ENCODE measurements at regions of chr9 and their contacts with region 1.

Region 1: DNA sequence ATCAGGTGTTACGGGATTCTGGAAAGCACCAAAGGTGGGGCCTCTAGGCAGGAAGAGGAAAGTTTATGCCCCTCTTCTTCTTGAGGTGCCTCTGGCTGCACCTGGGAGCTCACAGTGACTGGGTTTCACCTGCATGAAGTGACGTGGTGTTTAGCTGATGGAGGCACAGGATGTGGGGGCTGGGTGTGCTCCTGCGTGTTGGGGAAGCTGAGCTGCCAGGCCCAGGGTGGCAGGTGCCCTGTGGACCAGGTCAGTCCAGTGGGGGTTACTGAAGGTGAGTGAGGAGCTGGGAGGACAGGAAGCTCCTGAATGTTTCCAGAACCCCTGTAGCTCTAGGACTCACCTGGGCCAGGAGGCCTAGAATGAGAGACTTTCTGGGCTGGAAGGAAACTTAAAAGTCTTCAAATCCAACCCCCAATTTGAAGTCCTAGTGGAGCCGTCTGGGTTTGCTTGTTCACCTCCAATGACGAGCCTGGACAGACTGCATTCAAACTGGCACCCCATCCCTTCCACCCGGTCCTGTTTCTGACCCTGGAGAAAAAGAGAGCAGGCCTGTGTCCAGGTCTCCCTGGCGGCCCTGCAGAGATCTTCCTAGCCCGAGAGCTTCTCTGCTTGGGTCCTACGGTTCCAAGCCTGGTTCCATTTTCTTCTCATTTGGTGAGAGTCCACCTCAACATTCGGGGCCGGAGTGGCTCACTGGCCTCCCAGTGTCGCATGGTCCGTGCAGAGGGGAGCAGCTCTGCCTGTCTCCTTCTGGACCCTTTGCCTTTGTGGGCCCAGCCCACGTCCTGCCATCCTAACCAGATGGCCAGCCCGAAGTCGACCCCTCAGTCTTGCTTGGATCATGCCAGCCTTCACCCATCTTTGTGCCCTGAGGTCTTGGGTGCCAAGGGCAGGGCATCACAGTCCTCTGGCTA is 22.3 kb downstream of the TRAF1 start:
- DNase-seq: peak; percentile 89
- H3K4me3 ChIP-seq: peak overlapping the region; percentile 21
- H3K27ac ChIP-seq: peak overlapping the region; percentile 97
- H3K4me1 ChIP-seq: peaks cover 76% of the 10 kb centered on the region
- CTCF ChIP-seq: no peak

Region 2: GRCh38 chr9:120723547-120723946 is 180.8 kb before region 1 on chr9:
- CTCF ChIA-PET with region 1: no interaction called
- POLR2A ChIA-PET with region 1: no interaction called
- intact Hi-C with region 1: no loop called
- DNase-seq: no peak
- H3K4me3 ChIP-seq: no peak overlapping the region
- H3K27ac ChIP-seq: no peak overlapping the region
- H3K4me1 ChIP-seq: no peaks in the 10 kb centered on the region
- CTCF ChIP-seq: no peak

Region 3: DNA sequence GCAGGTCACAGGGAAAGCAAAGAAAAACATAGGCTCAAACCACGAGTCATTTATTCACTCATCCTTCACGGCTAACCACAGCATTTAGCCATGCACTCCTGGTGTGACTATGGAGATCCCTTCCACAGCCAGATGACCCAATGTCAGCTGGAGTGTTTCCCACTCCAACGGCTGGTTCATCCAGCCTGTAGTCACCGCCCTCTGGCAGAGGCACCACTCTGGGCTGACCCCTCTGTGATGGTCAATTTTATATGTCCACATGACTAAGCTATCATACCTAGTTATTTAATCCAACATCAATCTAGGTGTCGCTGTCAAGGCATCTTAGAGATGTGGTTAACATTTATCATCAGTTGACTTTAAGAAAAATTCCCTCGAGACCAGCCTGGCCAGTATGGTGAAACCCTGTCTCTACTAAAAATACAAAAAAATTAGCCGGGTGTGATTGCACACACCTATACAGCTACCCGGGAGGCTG is 17.8 kb before region 1 on chr9:
- CTCF ChIA-PET with region 1: interaction called, 15 read pairs
- POLR2A ChIA-PET with region 1: interaction called, 31 read pairs
- intact Hi-C with region 1: no loop called
- DNase-seq: peak; percentile 69
- H3K4me3 ChIP-seq: no peak overlapping the region
- H3K27ac ChIP-seq: peak overlapping the region; percentile 44
- H3K4me1 ChIP-seq: peaks cover 86% of the 10 kb centered on the region
- CTCF ChIP-seq: peak; percentile 54

Region 4: GRCh38 chr9:120892748-120893610 is 11.3 kb before region 1 on chr9:
- CTCF ChIA-PET with region 1: interaction called, 15 read pairs
- POLR2A ChIA-PET with region 1: interaction called, 31 read pairs
- intact Hi-C with region 1: no loop called
- DNase-seq: peak; percentile 97
- H3K4me3 ChIP-seq: peak overlapping the region; percentile 7
- H3K27ac ChIP-seq: peak overlapping the region; percentile 98
- H3K4me1 ChIP-seq: peaks cover 95% of the 10 kb centered on the region
- CTCF ChIP-seq: no peak

Region 5: GRCh38 chr9:120928483-120929228 is 24.3 kb after region 1 on chr9:
- CTCF ChIA-PET with region 1: interaction called, 7 read pairs
- POLR2A ChIA-PET with region 1: interaction called, 100 read pairs
- intact Hi-C with region 1: loop called (anchors 1 kb)
- DNase-seq: peak; percentile 87
- H3K4me3 ChIP-seq: peak overlapping the region; percentile 74
- H3K27ac ChIP-seq: peak overlapping the region; percentile 96
- H3K4me1 ChIP-seq: peaks cover 97% of the 10 kb centered on the region
- CTCF ChIP-seq: no peak

Region 6: DNA sequence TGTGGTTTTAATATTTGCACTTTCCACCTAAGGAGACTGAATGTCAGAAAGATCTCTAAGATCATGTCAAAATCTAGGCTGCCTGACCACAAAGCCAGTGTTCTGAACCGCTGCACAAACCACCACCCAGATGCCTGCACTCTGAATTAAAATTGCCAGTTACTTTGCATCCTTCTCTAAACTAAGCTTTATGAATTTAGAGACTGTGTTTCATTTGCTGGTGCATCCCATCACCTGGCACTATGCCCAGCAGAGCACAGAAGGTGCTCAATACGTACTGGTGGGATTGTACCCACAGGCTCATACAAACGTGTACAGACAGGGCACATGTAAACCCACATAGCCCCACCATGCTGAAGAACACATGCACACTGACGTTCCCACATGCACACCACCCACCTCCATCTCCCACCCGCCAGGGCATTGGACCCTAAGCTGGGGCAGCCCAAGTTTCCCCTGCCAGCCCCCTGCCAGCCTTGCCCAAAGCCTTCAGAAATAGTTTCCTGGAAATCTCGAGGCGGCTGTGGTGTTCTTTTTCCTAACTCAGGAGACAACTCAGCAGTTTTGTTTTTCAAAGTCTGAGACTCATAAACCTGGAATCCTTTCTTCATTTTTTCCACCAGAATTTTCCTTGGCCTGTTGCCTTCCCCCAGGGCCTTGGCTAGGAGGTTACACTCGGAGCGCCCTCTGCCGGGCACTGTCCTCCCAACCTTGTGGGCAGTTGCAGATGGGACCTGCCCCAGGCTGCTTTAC is 31.9 kb after region 1 on chr9:
- CTCF ChIA-PET with region 1: interaction called, 3 read pairs
- POLR2A ChIA-PET with region 1: interaction called, 100 read pairs
- intact Hi-C with region 1: loop called (anchors 2 kb)
- DNase-seq: peak; percentile 92
- H3K4me3 ChIP-seq: peak overlapping the region; percentile 49
- H3K27ac ChIP-seq: peak overlapping the region; percentile 96
- H3K4me1 ChIP-seq: peaks cover 81% of the 10 kb centered on the region
- CTCF ChIP-seq: peak; percentile 100

Region 7: DNA sequence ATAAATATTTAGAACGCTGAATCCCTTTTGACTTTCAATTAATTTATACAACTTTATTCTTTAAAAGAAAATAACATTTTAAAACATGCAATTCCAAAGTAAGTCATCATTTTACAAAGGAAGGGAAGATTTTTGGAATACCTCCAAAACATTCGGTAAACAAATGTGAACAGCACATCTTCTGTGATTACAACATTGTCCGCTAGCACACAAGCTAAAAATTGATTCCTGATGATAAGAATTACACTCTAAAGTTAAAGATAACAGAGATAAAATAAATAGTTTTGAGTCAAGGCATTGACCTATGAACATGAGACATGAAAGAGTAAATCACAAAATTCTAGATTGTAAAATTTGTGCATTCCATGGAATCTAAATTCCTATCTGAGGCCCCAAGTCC is 78.5 kb after region 1 on chr9:
- CTCF ChIA-PET with region 1: no interaction called
- POLR2A ChIA-PET with region 1: no interaction called
- intact Hi-C with region 1: no loop called
- DNase-seq: no peak
- H3K4me3 ChIP-seq: no peak overlapping the region
- H3K27ac ChIP-seq: no peak overlapping the region
- H3K4me1 ChIP-seq: no peaks in the 10 kb centered on the region
- CTCF ChIP-seq: no peak

Region 8: GRCh38 chr9:121172726-121173487 is 268.6 kb after region 1 on chr9:
- CTCF ChIA-PET with region 1: no interaction called
- POLR2A ChIA-PET with region 1: no interaction called
- intact Hi-C with region 1: no loop called
- DNase-seq: no peak
- H3K4me3 ChIP-seq: no peak overlapping the region
- H3K27ac ChIP-seq: no peak overlapping the region
- H3K4me1 ChIP-seq: no peaks in the 10 kb centered on the region
- CTCF ChIP-seq: no peak